Activated CD8-positive, alpha-beta T cell treated with anti-CD3 and anti-CD28 coated beads for 36 hours (primary cell): ENCODE measurements at regions of chr2 and their contacts with region 1.

Region 1: GRCh38 chr2:12931186-12931844 is 214.6 kb downstream of the TRIB2 start:
- DNase-seq: no peak
- ATAC-seq: peak; percentile 56
- H3K4me3 Mint-ChIP-seq: no peak overlapping the region
- H3K27ac Mint-ChIP-seq: no peak overlapping the region
- H3K4me1 Mint-ChIP-seq: peaks cover 4% of the 10 kb centered on the region
- H3K27me3 Mint-ChIP-seq: peaks cover 11% of the 10 kb centered on the region
- CTCF ChIP-seq: peak; percentile 78

Region 2: GRCh38 chr2:11829947-11830707 is 1101.2 kb before region 1 on chr2:
- CTCF ChIA-PET with region 1: interaction called, 12 read pairs
- POLR2A ChIA-PET with region 1: no interaction called
- intact Hi-C with region 1: no loop called
- DNase-seq: peak; percentile 69
- ATAC-seq: peak; percentile 78
- H3K4me3 Mint-ChIP-seq: peak overlapping the region; percentile 49
- H3K27ac Mint-ChIP-seq: peak overlapping the region; percentile 72
- H3K4me1 Mint-ChIP-seq: peaks cover 54% of the 10 kb centered on the region
- H3K27me3 Mint-ChIP-seq: peaks cover 15% of the 10 kb centered on the region
- CTCF ChIP-seq: no peak

Region 3: DNA sequence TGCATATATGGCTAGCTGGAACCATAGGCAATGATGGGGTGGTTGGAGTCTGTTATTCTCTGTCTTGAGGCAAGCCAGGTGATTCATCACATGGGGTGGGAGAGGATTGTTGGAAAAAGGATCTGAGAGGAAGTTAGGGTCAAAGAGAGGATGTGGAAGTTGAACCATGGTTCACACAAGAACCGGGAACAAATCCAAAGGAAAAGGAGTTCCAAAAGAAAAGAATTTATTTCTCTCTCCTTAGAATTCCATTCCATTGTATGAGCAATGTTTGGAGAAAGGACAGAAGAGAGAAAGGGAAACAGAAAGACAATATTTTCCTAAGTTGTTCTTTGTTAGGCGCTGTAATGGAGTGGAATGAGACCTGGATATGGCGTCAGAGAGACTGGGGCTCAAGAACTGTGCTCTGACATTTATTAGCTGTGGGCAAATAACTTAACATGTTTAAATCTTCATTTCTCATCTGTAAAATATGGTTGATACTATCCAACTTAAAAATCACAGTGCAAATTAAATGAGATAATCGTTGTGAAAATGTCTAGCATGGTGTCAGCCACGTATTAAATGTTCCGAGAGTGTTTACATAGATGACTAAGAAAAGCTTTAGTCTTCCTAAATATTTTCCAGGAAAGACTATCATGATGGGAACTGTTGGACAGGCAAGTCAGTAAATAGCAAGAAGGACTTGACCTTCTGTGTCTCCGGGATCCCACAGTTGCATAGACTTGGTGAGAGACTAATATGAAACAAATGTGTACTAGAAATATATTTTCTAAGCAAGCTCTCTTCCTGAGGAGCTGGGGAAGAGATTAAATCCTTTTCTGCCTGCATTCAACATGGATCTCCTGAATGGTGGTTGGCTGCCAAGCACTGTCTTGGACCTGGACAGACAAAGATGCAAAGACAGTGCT is 143.2 kb before region 1 on chr2:
- CTCF ChIA-PET with region 1: no interaction called
- POLR2A ChIA-PET with region 1: no interaction called
- intact Hi-C with region 1: no loop called
- DNase-seq: no peak
- ATAC-seq: no peak
- H3K4me3 Mint-ChIP-seq: no peak overlapping the region
- H3K27ac Mint-ChIP-seq: no peak overlapping the region
- H3K4me1 Mint-ChIP-seq: no peaks in the 10 kb centered on the region
- H3K27me3 Mint-ChIP-seq: peaks cover 4% of the 10 kb centered on the region
- CTCF ChIP-seq: no peak

Region 4: DNA sequence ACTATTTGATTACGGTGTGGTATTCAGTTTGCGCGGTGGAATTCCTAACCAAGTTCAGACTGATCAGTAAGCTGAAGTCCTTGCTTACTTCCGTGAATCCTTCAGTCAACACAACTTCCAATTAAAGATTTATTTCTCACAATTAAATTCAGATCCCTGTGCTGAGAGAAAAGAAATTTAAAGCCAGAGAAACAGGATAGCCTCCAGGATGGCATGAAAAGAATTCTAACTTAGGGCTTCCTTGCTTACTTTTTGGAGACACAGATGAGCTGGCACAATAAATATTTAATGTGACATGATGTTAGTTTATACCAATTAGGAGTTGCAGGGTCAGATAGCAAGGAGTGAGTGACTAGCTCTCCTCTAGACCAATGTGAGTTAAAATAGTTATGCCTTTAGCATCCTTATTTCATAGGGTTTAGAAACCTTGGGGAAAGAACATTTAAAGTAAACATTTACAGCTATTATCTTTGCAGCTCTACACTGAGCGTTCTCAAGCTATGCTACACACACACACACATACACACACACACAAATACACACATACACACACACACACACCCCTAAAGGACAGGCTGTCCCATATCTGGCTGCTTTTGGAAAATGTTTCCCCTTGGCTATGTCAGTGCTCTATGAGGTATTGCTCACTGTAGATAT is 63.6 kb before region 1 on chr2:
- CTCF ChIA-PET with region 1: interaction called, 15 read pairs
- POLR2A ChIA-PET with region 1: no interaction called
- intact Hi-C with region 1: no loop called
- DNase-seq: no peak
- ATAC-seq: no peak
- H3K4me3 Mint-ChIP-seq: no peak overlapping the region
- H3K27ac Mint-ChIP-seq: no peak overlapping the region
- H3K4me1 Mint-ChIP-seq: no peaks in the 10 kb centered on the region
- H3K27me3 Mint-ChIP-seq: peaks cover 6% of the 10 kb centered on the region
- CTCF ChIP-seq: no peak

Region 5: DNA sequence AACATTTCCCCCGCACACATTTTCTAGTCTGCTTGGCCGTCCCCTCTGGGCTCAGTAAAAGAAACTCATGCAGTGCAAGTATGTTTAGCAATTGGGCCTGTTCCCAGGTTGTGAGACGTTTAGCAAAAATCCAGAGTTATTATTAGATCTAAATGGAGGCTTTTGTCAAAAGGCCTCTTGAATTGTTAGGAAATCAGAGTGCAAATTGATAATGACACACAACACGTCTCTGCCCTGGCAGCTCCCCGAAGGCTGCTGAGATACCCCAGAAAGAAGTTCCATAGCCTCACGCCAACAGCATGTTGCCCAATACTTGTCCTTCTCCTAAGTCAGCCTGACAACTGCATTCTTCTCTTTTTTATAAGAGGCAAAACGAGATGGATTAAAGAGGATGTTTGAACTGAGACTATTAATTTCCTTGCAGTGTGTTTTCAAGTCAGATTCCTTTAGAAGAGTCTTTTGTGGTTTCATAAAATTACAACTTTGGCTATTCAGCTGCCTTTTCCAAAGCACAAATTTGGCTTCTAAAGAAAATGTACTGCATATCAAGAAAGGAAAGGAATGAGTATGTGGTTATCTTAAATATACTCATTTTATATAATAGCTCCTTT is 12.4 kb before region 1 on chr2:
- CTCF ChIA-PET with region 1: interaction called, 20 read pairs
- POLR2A ChIA-PET with region 1: no interaction called
- intact Hi-C with region 1: no loop called
- DNase-seq: no peak
- ATAC-seq: no peak
- H3K4me3 Mint-ChIP-seq: no peak overlapping the region
- H3K27ac Mint-ChIP-seq: no peak overlapping the region
- H3K4me1 Mint-ChIP-seq: no peaks in the 10 kb centered on the region
- H3K27me3 Mint-ChIP-seq: peaks cover 19% of the 10 kb centered on the region
- CTCF ChIP-seq: no peak

Region 6: GRCh38 chr2:12967804-12968203 is 36.5 kb after region 1 on chr2:
- CTCF ChIA-PET with region 1: interaction called, 12 read pairs
- POLR2A ChIA-PET with region 1: no interaction called
- intact Hi-C with region 1: no loop called
- DNase-seq: no peak
- ATAC-seq: no peak
- H3K4me3 Mint-ChIP-seq: no peak overlapping the region
- H3K27ac Mint-ChIP-seq: no peak overlapping the region
- H3K4me1 Mint-ChIP-seq: peaks cover 26% of the 10 kb centered on the region
- H3K27me3 Mint-ChIP-seq: peaks cover 24% of the 10 kb centered on the region
- CTCF ChIP-seq: no peak